A549 (cell line): ENCODE measurements at regions of chr11 and their contacts with region 1.

Region 1: DNA sequence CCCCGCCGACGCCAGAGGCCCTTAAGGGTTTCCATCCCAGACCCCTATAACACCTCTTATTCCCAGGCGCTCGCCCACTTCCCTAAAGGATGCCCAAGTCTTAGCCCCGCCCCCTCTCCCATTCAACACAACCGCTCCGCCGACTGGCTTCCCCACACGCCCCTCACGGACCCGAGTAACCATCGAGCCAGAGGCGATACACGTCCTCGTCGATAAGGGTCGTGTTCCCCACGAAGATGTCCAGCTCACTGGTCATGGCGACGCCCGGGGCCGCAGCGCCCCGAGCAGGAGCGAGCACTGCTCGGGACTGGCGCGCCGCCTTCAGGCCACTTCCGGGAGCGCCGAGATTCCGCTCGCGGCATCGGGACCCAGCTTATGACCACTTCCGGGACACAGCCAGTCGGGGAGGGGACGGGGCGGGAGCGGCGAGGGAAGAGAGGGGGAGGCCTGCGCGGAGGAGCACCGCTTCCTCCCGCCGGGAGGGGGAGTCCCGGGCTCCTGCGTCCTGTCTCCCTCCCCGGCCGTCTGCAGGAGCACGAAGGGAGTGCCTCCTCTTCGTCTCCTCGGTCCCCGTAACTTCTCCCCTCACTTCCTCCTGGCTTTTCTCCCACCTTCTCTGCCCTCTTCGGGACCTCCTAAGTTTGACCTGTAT is at the start of gene FIBP:
- DNase-seq: peak; percentile 97
- ATAC-seq: peak; percentile 43 to 73
- H3K4me3 ChIP-seq: peak within 1 kb of the TSS; percentile 72
- H3K27ac ChIP-seq: peak within 1 kb of the TSS; percentile 93 to 96
- H3K4me1 ChIP-seq: peaks cover 50% of the 10 kb centered on the region
- CTCF ChIP-seq: peak; percentile 81
- EP300 ChIP-seq: no peak
- POLR2A ChIP-seq: peak; percentile 91
- RAD21 ChIP-seq: peak; percentile 45 to 61
- polyA plus RNA-seq, gene FIBP: 72.2 and 83.0 TPM in 2 replicates

Region 2: DNA sequence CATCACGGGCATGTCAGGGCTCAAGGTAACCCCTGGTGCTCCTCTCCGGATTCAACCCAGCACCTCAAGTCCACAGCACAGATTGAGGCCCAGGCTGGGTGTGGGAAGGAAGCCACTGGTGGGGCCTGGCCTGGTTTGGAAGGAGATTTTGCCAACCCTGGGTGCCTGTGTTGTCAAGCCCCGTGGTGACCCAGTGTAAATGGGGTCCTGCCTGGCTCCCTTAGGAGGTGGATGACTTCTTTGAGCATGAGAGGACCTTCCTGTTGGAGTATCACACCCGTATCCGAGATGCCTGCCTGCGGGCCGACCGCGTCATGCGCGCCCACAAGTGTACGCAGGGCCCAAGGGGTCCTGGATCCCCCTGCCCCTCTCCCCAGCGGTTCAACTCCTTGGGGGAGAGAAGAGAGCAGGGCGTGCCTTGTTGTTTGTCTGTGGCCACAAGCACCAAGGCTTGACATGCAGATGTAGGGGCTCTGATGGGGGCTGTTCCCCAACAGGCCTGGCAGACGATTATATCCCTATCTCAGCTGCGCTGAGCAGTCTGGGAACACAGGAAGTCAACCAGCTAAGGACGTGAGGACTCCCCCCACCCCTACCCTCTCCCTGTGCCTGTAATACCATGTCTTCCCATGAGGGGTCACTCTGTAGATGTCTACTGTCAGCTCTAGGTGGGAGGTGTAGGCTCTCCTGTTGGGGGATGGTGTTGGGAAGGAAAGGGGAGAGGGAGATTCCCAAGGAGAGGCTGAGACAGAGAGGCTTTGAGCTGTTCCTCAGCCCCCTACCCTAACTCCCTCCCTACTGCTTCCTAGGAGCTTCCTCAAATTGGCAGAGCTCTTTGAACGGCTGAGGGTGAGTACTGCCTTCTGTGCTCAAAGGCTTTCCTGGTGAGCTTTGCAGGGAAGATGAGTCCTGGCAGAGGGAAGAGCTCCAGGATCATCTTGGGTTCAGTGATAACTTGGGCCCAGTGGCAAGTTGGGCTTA is 37.2 kb before region 1 on chr11:
- CTCF ChIA-PET with region 1: interaction called, 24 read pairs
- POLR2A ChIA-PET with region 1: interaction called, 7 read pairs
- DNase-seq: peak in 1 of 2 experiments; percentile 72
- ATAC-seq: peak; percentile 33 to 60
- H3K4me3 ChIP-seq: no peak overlapping the region
- H3K27ac ChIP-seq: no peak overlapping the region
- H3K4me1 ChIP-seq: peaks cover 21% of the 10 kb centered on the region
- CTCF ChIP-seq: peak; percentile 35; the same call in 2 of the 3 replicates
- EP300 ChIP-seq: no peak
- POLR2A ChIP-seq: no peak
- RAD21 ChIP-seq: no peak

Region 3: GRCh38 chr11:65873318-65874156 is 14.8 kb before region 1 on chr11:
- CTCF ChIA-PET with region 1: interaction called, 158 read pairs
- POLR2A ChIA-PET with region 1: interaction called, 9 read pairs
- DNase-seq: peak; percentile 92 to 95
- ATAC-seq: peak; percentile 60 to 79
- H3K4me3 ChIP-seq: peak overlapping the region; percentile 55
- H3K27ac ChIP-seq: peak overlapping the region; percentile 82 to 84
- H3K4me1 ChIP-seq: peaks cover 6% of the 10 kb centered on the region
- CTCF ChIP-seq: no peak
- EP300 ChIP-seq: no peak
- POLR2A ChIP-seq: peak; percentile 86
- RAD21 ChIP-seq: no peak

Region 4: DNA sequence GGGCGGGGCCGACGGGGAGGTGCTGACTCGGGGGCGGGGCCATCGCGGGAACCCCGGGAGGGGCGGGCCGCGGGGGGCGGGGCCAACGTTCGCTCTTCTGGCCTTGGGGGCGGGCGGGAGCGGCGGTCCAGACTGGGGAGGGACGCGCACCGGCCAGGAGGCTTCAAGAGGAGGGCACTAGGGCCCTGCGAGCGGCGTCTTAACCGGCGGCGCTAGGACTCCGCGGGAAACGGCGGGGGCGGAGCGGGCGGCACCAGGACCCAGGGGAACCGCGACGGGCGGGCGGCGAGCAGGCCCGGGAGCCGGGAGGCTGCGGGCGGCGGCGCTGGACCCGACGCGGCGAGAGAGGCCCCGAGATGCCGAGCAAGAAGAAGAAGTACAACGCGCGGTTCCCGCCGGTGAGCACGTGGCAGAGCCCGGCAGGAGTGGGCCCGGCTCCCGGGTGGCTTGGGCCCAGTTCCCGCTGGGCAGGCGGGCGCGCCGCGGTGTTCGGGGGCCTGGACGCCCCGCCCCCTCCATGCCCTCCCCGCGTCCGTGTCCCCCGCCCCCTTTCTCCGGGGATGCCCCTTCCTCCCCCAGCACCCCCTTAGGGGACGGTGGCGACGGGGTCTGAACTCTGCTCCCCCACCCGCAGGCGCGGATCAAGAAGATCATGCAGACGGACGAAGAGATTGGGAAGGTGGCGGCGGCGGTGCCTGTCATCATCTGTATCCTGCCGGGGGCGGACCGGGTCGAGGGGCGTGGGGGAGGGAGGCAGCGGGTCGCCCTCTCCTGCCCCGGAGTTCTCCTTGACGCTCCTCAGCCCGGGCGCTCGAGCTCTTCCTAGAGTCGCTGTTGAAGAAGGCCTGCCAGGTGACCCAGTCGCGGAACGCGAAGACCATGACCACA is 31.1 kb after region 1 on chr11 and contains the start of gene DRAP1:
- CTCF ChIA-PET with region 1: interaction called, 618 read pairs
- POLR2A ChIA-PET with region 1: interaction called, 15 read pairs
- DNase-seq: peak; percentile 86 to 99
- ATAC-seq: peak; percentile 65 to 81
- H3K4me3 ChIP-seq: peak within 1 kb of the TSS; percentile 97
- H3K27ac ChIP-seq: peak within 1 kb of the TSS; percentile 95 to 100
- H3K4me1 ChIP-seq: peaks cover 49% of the 10 kb centered on the region
- CTCF ChIP-seq: no peak
- EP300 ChIP-seq: peak in 1 of 2 experiments; percentile 31; a peak in 1 of 5 replicates
- POLR2A ChIP-seq: peak; percentile 50
- RAD21 ChIP-seq: peak; percentile 18 to 40; a peak in 2 of 5 replicates
- polyA plus RNA-seq, gene DRAP1: 27.8 and 73.7 TPM in 2 replicates

Region 5: GRCh38 chr11:65954771-65955170 is 66.5 kb after region 1 on chr11:
- CTCF ChIA-PET with region 1: interaction called, 25 read pairs
- POLR2A ChIA-PET with region 1: interaction called, 3 read pairs
- DNase-seq: no peak
- ATAC-seq: no peak
- H3K4me3 ChIP-seq: no peak overlapping the region
- H3K27ac ChIP-seq: no peak overlapping the region
- H3K4me1 ChIP-seq: peaks cover 9% of the 10 kb centered on the region
- CTCF ChIP-seq: no peak
- EP300 ChIP-seq: no peak
- POLR2A ChIP-seq: no peak
- RAD21 ChIP-seq: no peak

Region 6: GRCh38 chr11:65981972-65982823 is 93.9 kb after region 1 on chr11:
- CTCF ChIA-PET with region 1: interaction called, 163 read pairs
- POLR2A ChIA-PET with region 1: interaction called, 3 read pairs
- DNase-seq: no peak
- ATAC-seq: peak; percentile 10 to 31; a peak in 4 of 6 replicates
- H3K4me3 ChIP-seq: no peak overlapping the region
- H3K27ac ChIP-seq: no peak overlapping the region
- H3K4me1 ChIP-seq: no peaks in the 10 kb centered on the region
- CTCF ChIP-seq: no peak
- EP300 ChIP-seq: no peak
- POLR2A ChIP-seq: no peak
- RAD21 ChIP-seq: no peak